BJ (cell line): ENCODE measurements at regions of chr4 and their contacts with region 1.

Region 1: GRCh38 chr4:98995183-98996055 is at the start of gene METAP1:
- DNase-seq: peak; percentile 70
- H3K4me3 ChIP-seq: peak within 1 kb of the TSS; percentile 95
- H3K27me3 ChIP-seq: no peaks in the 10 kb centered on the region
- CTCF ChIP-seq: peak; percentile 71
- polyA plus RNA-seq, gene METAP1: 50.2 and 54.1 TPM in 2 replicates

Region 2: DNA sequence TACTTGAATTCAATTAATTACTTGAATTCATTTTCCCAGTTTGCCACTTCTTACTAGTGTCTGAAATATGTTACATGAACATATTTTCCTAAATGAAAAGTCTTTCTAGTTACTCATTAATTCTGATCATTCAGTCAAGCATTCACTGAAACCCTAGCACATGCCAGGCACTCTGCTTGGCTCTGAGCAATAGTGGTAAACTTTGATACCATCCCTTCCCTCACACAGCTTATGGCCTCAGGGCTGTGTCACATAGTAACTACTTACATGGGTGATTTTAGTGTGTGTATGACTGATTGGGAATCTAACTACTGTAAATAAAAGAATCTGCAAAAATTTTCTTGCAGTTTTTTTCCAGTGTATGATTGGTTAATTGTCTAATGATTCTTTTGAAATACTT is 32.8 kb after region 1 on chr4:
- CTCF ChIA-PET with region 1: interaction called, 3 read pairs
- POLR2A ChIA-PET with region 1: interaction called, 10 read pairs
- DNase-seq: peak; percentile 4
- H3K4me3 ChIP-seq: no peak overlapping the region
- H3K27me3 ChIP-seq: no peaks in the 10 kb centered on the region
- CTCF ChIP-seq: no peak

Region 3: GRCh38 chr4:99062120-99062519 is 66.7 kb after region 1 on chr4:
- CTCF ChIA-PET with region 1: interaction called, 46 read pairs
- POLR2A ChIA-PET with region 1: no interaction called
- DNase-seq: no peak
- H3K4me3 ChIP-seq: no peak overlapping the region
- H3K27me3 ChIP-seq: no peaks in the 10 kb centered on the region
- CTCF ChIP-seq: no peak